ENCODE measurements at regions of chr7 and their contacts with region 1.

Region 1: DNA sequence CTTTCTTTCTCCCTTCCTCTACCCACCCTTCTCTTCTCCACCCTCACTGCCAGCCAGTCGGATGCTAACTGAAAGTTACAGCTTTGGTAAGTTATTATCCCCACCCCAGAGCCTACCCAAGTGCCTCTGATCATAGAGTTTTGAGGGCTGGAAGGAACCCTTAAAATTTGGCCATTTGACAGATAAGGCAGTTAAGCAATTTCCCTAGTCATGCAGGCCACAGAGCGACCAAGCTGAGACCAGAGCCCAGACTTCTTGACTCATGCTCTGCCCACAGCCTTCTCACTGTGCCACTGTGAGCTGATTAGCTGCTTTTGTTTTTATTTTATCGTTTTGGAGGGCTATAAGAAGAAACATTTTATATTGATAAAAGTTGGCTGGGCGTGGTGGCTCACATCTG is 17.2 kb downstream of the SAP25 start:
- DNase-seq: no peak
- ATAC-seq: no peak
- H3K4me3 Mint-ChIP-seq: no peak overlapping the region
- H3K27ac Mint-ChIP-seq: peak overlapping the region; percentile 42
- H3K4me1 Mint-ChIP-seq: peaks cover 28% of the 10 kb centered on the region
- H3K27me3 Mint-ChIP-seq: no peaks in the 10 kb centered on the region

Region 2: DNA sequence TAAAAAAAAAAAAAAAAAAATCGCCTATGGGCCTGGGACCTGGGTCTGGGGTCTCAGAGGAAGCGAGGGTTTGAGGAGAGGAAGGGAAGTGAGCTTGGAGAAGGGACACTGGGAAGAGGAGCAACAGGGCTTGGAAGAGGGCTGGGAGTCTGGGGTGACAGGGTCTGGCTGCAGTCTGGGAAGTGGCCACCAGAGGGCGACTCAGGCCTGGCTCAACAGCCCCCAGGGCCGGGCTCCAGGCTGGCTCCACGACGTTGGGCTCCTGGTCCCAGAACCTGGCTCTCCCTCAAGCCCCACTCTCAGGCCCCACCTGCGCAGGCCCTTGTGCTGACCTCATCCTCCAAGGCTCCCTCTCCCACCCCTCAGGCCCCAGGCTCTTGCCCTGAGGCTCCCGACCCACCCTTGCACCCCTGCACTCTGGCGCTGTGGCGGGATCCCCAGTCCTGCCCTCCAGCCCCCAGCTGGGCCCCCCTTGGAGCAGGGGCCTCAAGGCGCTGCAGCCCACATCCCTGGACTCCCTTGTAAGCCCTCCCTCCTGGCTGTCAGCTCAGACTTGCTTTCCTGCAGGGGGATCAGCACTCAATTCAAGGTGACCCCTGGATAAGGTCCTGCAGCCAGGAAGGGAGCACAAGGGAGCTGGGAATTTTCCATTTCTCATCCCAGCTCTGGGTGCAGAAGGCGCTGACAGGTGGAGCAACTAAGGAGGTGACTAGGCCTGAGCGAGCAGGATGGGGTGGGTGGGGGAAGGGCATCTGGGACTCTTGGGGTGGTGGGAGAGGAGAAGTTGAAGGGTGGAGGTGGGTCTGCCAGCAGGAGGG is 87.1 kb before region 1 on chr7:
- CTCF ChIA-PET with region 1: interaction called, 34 read pairs
- DNase-seq: peak; percentile 85
- ATAC-seq: peak; percentile 86
- H3K4me3 Mint-ChIP-seq: no peak overlapping the region
- H3K27ac Mint-ChIP-seq: peak overlapping the region; percentile 49
- H3K4me1 Mint-ChIP-seq: peaks cover 23% of the 10 kb centered on the region
- H3K27me3 Mint-ChIP-seq: no peaks in the 10 kb centered on the region

Region 3: GRCh38 chr7:100493476-100494264 is 62.9 kb before region 1 on chr7:
- CTCF ChIA-PET with region 1: interaction called, 12 read pairs
- DNase-seq: peak; percentile 72
- ATAC-seq: peak; percentile 87
- H3K4me3 Mint-ChIP-seq: peak overlapping the region; percentile 48
- H3K27ac Mint-ChIP-seq: no peak overlapping the region
- H3K4me1 Mint-ChIP-seq: peaks cover 7% of the 10 kb centered on the region
- H3K27me3 Mint-ChIP-seq: peaks cover 14% of the 10 kb centered on the region

Region 4: GRCh38 chr7:100538654-100539435 is 17.7 kb before region 1 on chr7 and contains the start of gene AGFG2:
- CTCF ChIA-PET with region 1: interaction called, 158 read pairs
- DNase-seq: peak; percentile 100
- ATAC-seq: peak; percentile 95
- H3K4me3 Mint-ChIP-seq: peak within 1 kb of the TSS; percentile 99
- H3K27ac Mint-ChIP-seq: peak within 1 kb of the TSS; percentile 91
- H3K4me1 Mint-ChIP-seq: peaks cover 45% of the 10 kb centered on the region
- H3K27me3 Mint-ChIP-seq: no peaks in the 10 kb centered on the region
- total RNA-seq, gene AGFG2: 61.4 to 82.5 TPM

Region 5: GRCh38 chr7:100568896-100569844 is 12.6 kb after region 1 on chr7:
- CTCF ChIA-PET with region 1: interaction called, 12 read pairs
- DNase-seq: peak; percentile 73
- ATAC-seq: peak; percentile 48
- H3K4me3 Mint-ChIP-seq: peak overlapping the region; percentile 16
- H3K27ac Mint-ChIP-seq: peak overlapping the region; percentile 22
- H3K4me1 Mint-ChIP-seq: peaks cover 46% of the 10 kb centered on the region
- H3K27me3 Mint-ChIP-seq: no peaks in the 10 kb centered on the region

Measured in activated CD8-positive, alpha-beta memory T cell treated with anti-CD3 and anti-CD28 coated beads, Interleukin-2, amount 10 ng/mL, durations not matched to agents 7 days and 5 days (primary cell).